Activated T-helper 1 cell treated with anti-CD3 and anti-CD28 coated beads, Interleukin-12 subunit alpha, Interleukin-12 subunit beta, Interleukin-2, Interleukin-4 antibody, amounts not matched to agents 30 ng/mL and 10 ng/mL and 1 ng/mL, durations not matched to agents 14 hours and 24 hours and 36 hours (primary cell): ENCODE measurements at regions of chr19 and their contacts with region 1.

Region 1: GRCh38 chr19:57578487-57579205 is at the start of gene ZNF416:
- DNase-seq: peak; percentile 94
- H3K4me3 Mint-ChIP-seq: peak within 1 kb of the TSS; percentile 80
- H3K27ac Mint-ChIP-seq: peak within 1 kb of the TSS; percentile 74
- H3K4me1 Mint-ChIP-seq: peaks cover 18% of the 10 kb centered on the region
- H3K27me3 Mint-ChIP-seq: no peaks in the 10 kb centered on the region
- total RNA-seq, gene ZNF416: 3.2 and 3.7 TPM in 2 replicates

Region 2: GRCh38 chr19:56140583-56141416 is 1437.8 kb before region 1 on chr19 and contains the start of gene ZNF444:
- intact Hi-C with region 1: loop called (anchors 2 kb)
- DNase-seq: peak; percentile 99
- H3K4me3 Mint-ChIP-seq: peak within 1 kb of the TSS; percentile 82
- H3K27ac Mint-ChIP-seq: peak within 1 kb of the TSS; percentile 84
- H3K4me1 Mint-ChIP-seq: peaks cover 37% of the 10 kb centered on the region
- H3K27me3 Mint-ChIP-seq: no peaks in the 10 kb centered on the region
- total RNA-seq, gene ZNF444: 33.8 and 36.5 TPM in 2 replicates

Region 3: GRCh38 chr19:57362997-57363705 is 215.5 kb before region 1 on chr19 and contains the starts of genes TRAPPC2B and ZNF547:
- intact Hi-C with region 1: loop called (anchors 1 kb)
- DNase-seq: peak; percentile 98
- H3K4me3 Mint-ChIP-seq: peak within 1 kb of the TSS; percentile 89
- H3K27ac Mint-ChIP-seq: peak within 1 kb of the TSS; percentile 97
- H3K4me1 Mint-ChIP-seq: peaks cover 17% of the 10 kb centered on the region
- H3K27me3 Mint-ChIP-seq: no peaks in the 10 kb centered on the region
- total RNA-seq, gene TRAPPC2B: 3.8 and 4.7 TPM in 2 replicates
- total RNA-seq, gene ZNF547: 0.69 and 0.93 TPM in 2 replicates

Region 4: GRCh38 chr19:57527136-57527881 is 51.3 kb before region 1 on chr19 and contains the start of gene ZNF549:
- intact Hi-C with region 1: loop called (anchors 1 kb)
- DNase-seq: peak; percentile 85
- H3K4me3 Mint-ChIP-seq: peak within 1 kb of the TSS; percentile 93
- H3K27ac Mint-ChIP-seq: peak within 1 kb of the TSS; percentile 76
- H3K4me1 Mint-ChIP-seq: peaks cover 20% of the 10 kb centered on the region
- H3K27me3 Mint-ChIP-seq: peaks cover 2% of the 10 kb centered on the region
- total RNA-seq, gene ZNF549: 3.6 and 4.2 TPM in 2 replicates

Region 5: DNA sequence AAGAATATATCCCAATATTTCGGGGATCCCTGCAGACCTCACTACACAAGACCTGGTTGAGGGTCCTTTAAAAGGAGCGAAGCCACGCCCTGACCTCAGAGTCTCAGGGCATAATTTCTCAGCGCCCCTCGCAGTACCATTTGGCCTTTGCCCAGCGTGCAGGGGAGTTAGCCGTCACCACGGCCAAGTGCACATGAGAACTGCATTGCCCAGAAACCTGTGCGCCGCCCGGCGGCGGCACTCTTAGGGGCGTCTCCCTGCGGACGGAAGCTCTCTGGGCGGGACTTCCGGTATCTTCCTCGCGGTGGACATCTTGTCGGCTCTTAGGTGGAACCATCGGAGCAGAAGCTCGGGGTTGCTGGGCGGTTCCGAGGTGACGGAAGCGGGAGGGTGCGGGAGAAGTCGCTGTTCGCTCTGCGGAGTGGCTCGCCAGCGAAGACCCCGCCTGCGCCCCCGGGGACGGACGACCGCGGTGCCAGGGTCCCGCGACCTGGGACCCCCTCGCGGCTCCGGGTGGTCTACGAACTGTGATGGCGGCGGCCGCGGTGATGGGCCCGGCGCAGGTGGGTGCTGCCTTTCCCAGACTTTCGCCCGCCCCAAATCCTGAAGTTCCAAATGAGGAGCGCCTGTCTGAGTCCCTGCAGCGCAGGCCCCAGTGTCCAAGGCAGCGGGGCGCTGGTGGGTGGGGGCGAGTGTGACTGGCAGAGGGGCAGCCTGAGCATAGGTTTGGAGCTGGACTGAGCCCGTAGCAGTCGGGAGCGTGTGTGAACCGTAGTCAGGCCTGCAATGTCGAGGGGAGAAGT is 35.5 kb after region 1 on chr19 and contains the start of gene ZNF134:
- intact Hi-C with region 1: loop called (anchors 1 kb)
- DNase-seq: peak; percentile 84
- H3K4me3 Mint-ChIP-seq: peak within 1 kb of the TSS; percentile 90
- H3K27ac Mint-ChIP-seq: peak within 1 kb of the TSS; percentile 78
- H3K4me1 Mint-ChIP-seq: peaks cover 11% of the 10 kb centered on the region
- H3K27me3 Mint-ChIP-seq: no peaks in the 10 kb centered on the region
- total RNA-seq, gene ZNF134: 8.4 and 9.4 TPM in 2 replicates

Region 6: GRCh38 chr19:57746580-57747471 is 168.2 kb after region 1 on chr19 and contains the start of gene ZNF776:
- intact Hi-C with region 1: loop called (anchors 1 kb)
- DNase-seq: peak; percentile 79
- H3K4me3 Mint-ChIP-seq: peak within 1 kb of the TSS; percentile 90
- H3K27ac Mint-ChIP-seq: peak within 1 kb of the TSS; percentile 93
- H3K4me1 Mint-ChIP-seq: peaks cover 12% of the 10 kb centered on the region
- H3K27me3 Mint-ChIP-seq: peaks cover 2% of the 10 kb centered on the region
- total RNA-seq, gene ZNF776: 6.8 and 6.9 TPM in 2 replicates

Region 7: GRCh38 chr19:57914531-57914930 is 335.9 kb after region 1 on chr19:
- intact Hi-C with region 1: loop called (anchors 1 kb)
- DNase-seq: no peak
- H3K4me3 Mint-ChIP-seq: peak overlapping the region; percentile 91
- H3K27ac Mint-ChIP-seq: no peak overlapping the region
- H3K4me1 Mint-ChIP-seq: peaks cover 15% of the 10 kb centered on the region
- H3K27me3 Mint-ChIP-seq: no peaks in the 10 kb centered on the region